Thyroid gland (tissue), 4 donors: ENCODE measurements at regions of chr2 and their contacts with region 1.

Region 1: GRCh38 chr2:241271641-241272297 is 43.7 kb downstream of the HDLBP start:
- DNase-seq: peak; percentile 92 to 93
- H3K4me3 ChIP-seq: peak overlapping the region; percentile 41 to 98 (median 92)
- H3K27ac ChIP-seq: peak overlapping the region; percentile 87 to 98 (median 95)
- H3K4me1 ChIP-seq: peaks cover 18 to 23% of the 10 kb centered on the region in 2 donors
- H3K27me3 ChIP-seq: no peaks in the 10 kb centered on the region
- CTCF ChIP-seq: no peak
- POLR2A ChIP-seq: peak in 1 of 2 donors; percentile 72

Region 2: DNA sequence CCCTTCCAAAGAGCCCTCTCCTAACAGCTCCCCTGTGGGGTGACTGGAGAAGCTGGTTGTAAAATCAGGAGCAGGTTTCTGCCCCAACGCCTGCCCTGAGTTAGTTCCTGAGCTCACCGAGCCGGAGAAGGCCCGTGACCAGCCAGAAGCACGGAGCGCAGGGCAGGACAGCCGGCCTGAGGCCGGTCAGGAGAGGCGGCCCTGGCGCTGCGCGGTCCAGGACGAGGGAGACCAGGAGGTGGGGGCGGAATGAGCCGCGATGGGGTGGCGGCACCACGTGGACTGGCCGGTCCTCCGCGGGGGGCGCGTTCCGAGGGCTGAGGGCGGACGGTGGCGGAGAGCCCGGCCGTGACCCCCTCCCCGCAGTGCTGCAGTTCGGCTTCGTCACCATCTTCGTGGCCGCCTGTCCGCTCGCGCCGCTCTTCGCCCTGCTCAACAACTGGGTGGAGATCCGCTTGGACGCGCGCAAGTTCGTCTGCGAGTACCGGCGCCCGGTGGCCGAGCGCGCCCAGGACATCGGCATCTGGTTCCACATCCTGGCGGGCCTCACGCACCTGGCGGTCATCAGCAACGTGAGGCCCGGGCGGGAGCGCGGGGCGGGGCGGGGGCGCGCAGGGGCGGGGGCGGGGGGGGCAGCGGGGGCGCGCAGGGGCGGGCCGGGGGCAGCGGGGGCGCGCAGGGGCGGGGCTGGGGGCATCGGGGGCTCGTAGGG is 54.3 kb before region 1 on chr2:
- intact Hi-C with region 1: no loop called
- DNase-seq: peak; percentile 88 to 89
- H3K4me3 ChIP-seq: peak overlapping the region in 1 of 3 donors; percentile 26
- H3K27ac ChIP-seq: peak overlapping the region; percentile 68 to 85 (median 83)
- H3K4me1 ChIP-seq: peaks cover 8 to 9% of the 10 kb centered on the region in 2 donors
- H3K27me3 ChIP-seq: no peaks in the 10 kb centered on the region
- CTCF ChIP-seq: peak in 1 of 6 experiments; percentile 23
- POLR2A ChIP-seq: peak; percentile 29 to 51

Region 3: GRCh38 chr2:241315093-241315878 is 43.5 kb after region 1 on chr2 and contains the start of gene HDLBP:
- intact Hi-C with region 1: loop called (anchors 5 kb)
- DNase-seq: peak; percentile 99 to 100
- H3K4me3 ChIP-seq: peak within 1 kb of the TSS; percentile 66 to 98 (median 96)
- H3K27ac ChIP-seq: peak within 1 kb of the TSS; percentile 99 to 100 (median 99)
- H3K4me1 ChIP-seq: peaks cover 29 to 48% of the 10 kb centered on the region in 2 donors
- H3K27me3 ChIP-seq: no peaks in the 10 kb centered on the region
- CTCF ChIP-seq: peak in 1 of 6 experiments; percentile 6
- POLR2A ChIP-seq: peak; percentile 46 to 87
- total RNA-seq, gene HDLBP: 303 to 490 (median 435) TPM